ENCODE measurements at regions of chr11 and their contacts with region 1.

Region 1: DNA sequence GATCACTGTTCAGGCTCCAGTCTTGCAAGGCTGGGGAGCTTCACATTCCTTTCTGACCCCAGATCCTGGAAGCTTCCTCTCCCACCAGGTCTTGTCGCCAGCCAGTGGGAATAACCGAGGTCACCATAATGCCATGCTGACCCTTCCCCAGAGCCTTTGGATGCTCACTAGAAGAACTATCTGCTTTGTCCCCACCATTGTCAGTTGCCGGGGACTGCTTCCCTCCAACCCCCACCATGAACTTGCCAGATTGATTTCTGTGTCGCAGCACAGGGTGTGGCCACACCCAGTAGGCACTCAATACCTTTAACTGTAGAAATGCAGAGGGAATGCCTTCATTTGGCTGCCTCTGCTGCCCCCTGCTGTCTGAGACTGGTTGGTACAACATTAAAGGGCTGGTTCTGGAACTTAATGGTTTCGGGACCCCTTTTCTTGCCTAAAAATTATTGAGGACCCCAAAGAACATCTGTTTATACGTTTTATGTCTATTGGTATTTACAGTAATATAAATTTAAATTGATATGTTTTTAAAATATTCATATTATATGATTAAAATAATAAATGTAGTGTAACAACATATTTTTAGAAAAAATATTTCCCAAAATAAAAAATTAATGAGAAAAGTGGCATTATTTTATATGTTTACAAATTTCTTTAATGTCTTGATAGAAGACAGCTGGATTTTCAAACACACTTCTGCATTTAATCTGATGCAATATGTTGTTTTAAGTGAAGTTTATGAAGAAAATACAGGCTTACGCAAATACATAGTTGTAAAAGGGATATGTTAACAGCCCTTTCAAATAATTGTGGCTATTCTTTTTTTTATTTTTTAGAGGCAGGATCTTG is 6.7 kb upstream of the GDPD5 start:
- DNase-seq: peak; percentile 80
- CTCF ChIP-seq: peak; percentile 87

Region 2: GRCh38 chr11:75445315-75445953 is 87.0 kb before region 1 on chr11:
- in situ Hi-C with region 1: loop called (anchors 5 kb)
- DNase-seq: peak; percentile 85
- CTCF ChIP-seq: peak; percentile 99